GM12878 (cell line): ENCODE measurements at regions of chr1 and their contacts with region 1.

Region 1: DNA sequence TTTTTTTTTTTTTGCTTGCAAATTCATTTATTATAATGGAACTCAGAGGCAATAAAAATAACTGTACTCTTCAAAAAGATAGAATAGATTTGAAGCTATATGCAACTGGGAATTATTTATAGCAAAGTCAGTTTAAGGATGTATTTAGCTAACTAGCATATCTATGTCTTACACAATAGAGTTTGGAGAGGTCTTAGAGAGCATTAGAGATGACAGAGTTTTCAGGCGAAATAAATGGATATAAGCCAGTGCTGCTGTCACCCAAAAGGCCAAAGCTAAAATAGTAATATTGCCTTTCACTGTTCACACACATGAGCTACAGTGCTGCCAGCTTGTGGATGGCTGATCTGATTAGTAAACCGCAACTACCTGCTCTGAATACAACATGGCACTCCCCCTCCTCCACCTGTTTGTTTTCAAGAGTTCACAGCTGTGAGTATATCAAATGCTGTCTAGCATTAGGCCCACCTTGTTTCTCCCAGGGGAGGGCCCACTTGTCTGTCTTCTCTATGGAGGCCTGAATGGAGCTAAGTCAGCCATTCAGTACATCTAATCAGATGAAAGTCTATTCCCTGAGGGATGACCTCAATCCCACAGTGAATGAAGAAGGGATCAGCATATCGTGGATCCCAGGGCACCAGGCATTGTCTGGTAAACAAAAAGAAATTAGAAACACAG is 25.2 kb upstream of the SSX2IP start:
- DNase-seq: no peak
- ATAC-seq: peak; percentile 25
- H3K4me3 ChIP-seq: no peak overlapping the region
- H3K27ac ChIP-seq: no peak overlapping the region
- H3K4me1 ChIP-seq: no peaks in the 10 kb centered on the region
- H3K27me3 ChIP-seq: no peaks in the 10 kb centered on the region
- CTCF ChIP-seq: no peak
- EP300 ChIP-seq: no peak
- POLR2A ChIP-seq: no peak
- RAD21 ChIP-seq: no peak

Region 2: GRCh38 chr1:84704872-84705426 is 10.5 kb before region 1 on chr1:
- CTCF ChIA-PET with region 1: interaction called, 8 read pairs
- POLR2A ChIA-PET with region 1: interaction called, 11 read pairs
- RAD21 ChIA-PET with region 1: interaction called, 9 read pairs
- SMC1A ChIA-PET with region 1: interaction called, 113 read pairs
- in situ Hi-C with region 1: no loop called
- intact Hi-C with region 1: no loop called
- DNase-seq: no peak
- ATAC-seq: peak; percentile 77
- H3K4me3 ChIP-seq: no peak overlapping the region
- H3K27ac ChIP-seq: no peak overlapping the region
- H3K4me1 ChIP-seq: peaks cover 3% of the 10 kb centered on the region; the same call in 1 of the 2 replicates
- H3K27me3 ChIP-seq: no peaks in the 10 kb centered on the region; a peak in 1 of 4 replicates
- CTCF ChIP-seq: no peak
- EP300 ChIP-seq: no peak
- POLR2A ChIP-seq: no peak
- RAD21 ChIP-seq: no peak